H1 (cell line): ENCODE measurements at regions of chr7 and their contacts with region 1.

Region 1: DNA sequence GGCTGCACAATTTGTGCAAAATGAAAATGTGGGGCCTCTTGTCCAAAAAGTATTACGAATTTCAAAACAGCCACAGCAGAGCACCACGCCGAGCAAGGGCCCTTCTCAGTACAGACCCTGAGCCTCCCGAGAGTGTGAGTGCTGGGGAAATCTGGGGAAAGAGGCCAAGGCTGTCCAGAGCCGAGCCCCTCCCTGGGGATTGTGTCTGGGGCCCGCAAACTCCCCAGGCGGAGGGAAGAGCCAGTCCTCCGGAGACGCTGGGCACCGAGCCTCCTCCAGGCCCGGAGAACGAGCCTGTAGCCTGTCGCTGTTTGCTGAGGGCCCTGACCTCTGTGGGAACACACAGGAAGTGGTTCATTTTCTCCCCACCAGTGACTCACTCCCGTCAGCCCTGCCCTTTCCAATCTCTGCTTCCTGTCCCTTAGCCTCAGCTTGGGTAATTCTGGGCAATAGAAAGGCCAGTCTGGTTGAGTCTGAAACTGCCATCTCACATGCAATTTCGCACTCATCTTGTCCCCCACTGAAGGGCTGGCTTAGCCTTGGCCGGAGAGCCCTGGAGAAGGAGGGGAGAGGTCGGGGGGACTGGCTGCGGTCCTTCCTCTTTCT is 19.5 kb upstream of the GNA12 start:
- DNase-seq: no peak
- H3K4me3 ChIP-seq: no peak overlapping the region
- H3K27ac ChIP-seq: 0 out of 2 replicates have a peak overlapping the region, but pooled peaks have one; percentile 2
- H3K4me1 ChIP-seq: peaks cover 0 to 9% (median 3%) of the 10 kb centered on the region in 4 experiments; a peak in 5 of 7 replicates
- H3K27me3 ChIP-seq: no peaks in the 10 kb centered on the region; a peak in 1 of 7 replicates
- CTCF ChIP-seq: no peak
- EP300 ChIP-seq: no peak
- POLR2A ChIP-seq: no peak
- RAD21 ChIP-seq: no peak

Region 2: GRCh38 chr7:2471396-2471795 is 392.2 kb before region 1 on chr7:
- CTCF ChIA-PET with region 1: no interaction called
- POLR2A ChIA-PET with region 1: no interaction called
- DNase-seq: no peak
- H3K4me3 ChIP-seq: no peak overlapping the region
- H3K27ac ChIP-seq: no peak overlapping the region
- H3K4me1 ChIP-seq: peaks cover 0 to 21% (median 17%) of the 10 kb centered on the region in 4 experiments; a peak in 6 of 7 replicates
- H3K27me3 ChIP-seq: no peaks in the 10 kb centered on the region; a peak in 2 of 7 replicates
- CTCF ChIP-seq: no peak
- EP300 ChIP-seq: no peak
- POLR2A ChIP-seq: no peak
- RAD21 ChIP-seq: no peak

Region 3: GRCh38 chr7:2660585-2661408 is 202.8 kb before region 1 on chr7:
- CTCF ChIA-PET with region 1: no interaction called
- POLR2A ChIA-PET with region 1: no interaction called
- DNase-seq: peak in 1 of 2 experiments; percentile 71
- H3K4me3 ChIP-seq: no peak overlapping the region
- H3K27ac ChIP-seq: no peak overlapping the region
- H3K4me1 ChIP-seq: peaks cover 0 to 4% (median under 1%) of the 10 kb centered on the region in 4 experiments; a peak in 2 of 7 replicates
- H3K27me3 ChIP-seq: no peaks in the 10 kb centered on the region; a peak in 2 of 7 replicates
- CTCF ChIP-seq: peak in 2 of 3 experiments; percentile 50 to 60; a peak in 3 of 4 replicates
- EP300 ChIP-seq: no peak
- POLR2A ChIP-seq: no peak
- RAD21 ChIP-seq: peak; percentile 34 to 48; a peak in 3 of 4 replicates

Region 4: DNA sequence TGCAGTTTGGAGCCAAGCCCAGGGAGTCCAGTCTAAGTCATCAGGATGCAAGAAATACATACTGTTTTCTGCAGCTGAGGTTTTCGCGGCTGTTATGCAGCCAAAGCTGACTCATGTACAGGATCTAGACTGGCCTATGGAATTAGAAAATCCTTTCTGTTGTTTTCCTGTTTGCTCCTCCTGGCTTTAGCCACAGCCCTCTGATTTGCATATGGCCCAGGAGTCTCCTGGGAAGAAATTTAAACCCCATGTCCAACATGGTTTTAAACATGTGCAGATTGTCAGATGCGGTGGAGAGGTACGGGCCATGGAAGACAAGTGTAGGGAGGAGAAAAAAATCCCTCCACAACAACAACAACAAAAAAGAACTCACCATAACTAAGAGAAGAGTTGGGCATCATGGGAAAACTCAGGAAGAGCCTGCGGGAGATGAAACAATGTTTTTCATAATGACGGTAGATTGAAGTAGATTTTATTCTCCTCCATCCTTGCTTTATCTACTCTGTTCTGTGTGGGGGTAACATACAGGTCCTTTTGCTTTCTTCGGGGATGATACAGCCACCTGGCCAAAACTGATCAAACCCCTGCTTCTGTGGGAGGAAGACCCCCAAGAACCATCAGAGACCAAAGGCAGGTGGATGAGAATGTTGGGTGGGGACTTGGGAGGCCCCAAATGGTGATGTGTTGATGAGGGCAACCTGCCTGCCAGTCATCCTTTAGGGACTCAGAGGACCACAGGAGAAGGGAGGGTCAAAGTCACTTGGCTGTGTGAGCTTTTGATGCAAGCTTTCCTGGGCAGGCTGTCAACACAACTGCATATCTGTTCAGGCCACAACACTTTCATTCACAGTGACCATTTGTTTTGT is 10.4 kb after region 1 on chr7:
- CTCF ChIA-PET with region 1: interaction called, 10 read pairs
- POLR2A ChIA-PET with region 1: interaction called, 18 read pairs
- DNase-seq: peak in 1 of 2 experiments; percentile 74
- H3K4me3 ChIP-seq: no peak overlapping the region
- H3K27ac ChIP-seq: peak overlapping the region; percentile 94
- H3K4me1 ChIP-seq: peaks cover 0 to 19% (median 8%) of the 10 kb centered on the region in 4 experiments; a peak in 6 of 7 replicates
- H3K27me3 ChIP-seq: no peaks in the 10 kb centered on the region
- CTCF ChIP-seq: no peak
- EP300 ChIP-seq: no peak
- POLR2A ChIP-seq: peak; percentile 96 to 99
- RAD21 ChIP-seq: no peak

Region 5: GRCh38 chr7:2880874-2881533 is 17.4 kb after region 1 on chr7:
- CTCF ChIA-PET with region 1: interaction called, 34 read pairs
- POLR2A ChIA-PET with region 1: interaction called, 18 read pairs
- DNase-seq: peak in 1 of 2 experiments; percentile 80
- H3K4me3 ChIP-seq: no peak overlapping the region
- H3K27ac ChIP-seq: no peak overlapping the region
- H3K4me1 ChIP-seq: peaks cover 0 to 27% (median 14%) of the 10 kb centered on the region in 4 experiments; a peak in 6 of 7 replicates
- H3K27me3 ChIP-seq: no peaks in the 10 kb centered on the region
- CTCF ChIP-seq: no peak
- EP300 ChIP-seq: no peak
- POLR2A ChIP-seq: no peak
- RAD21 ChIP-seq: no peak

Region 6: DNA sequence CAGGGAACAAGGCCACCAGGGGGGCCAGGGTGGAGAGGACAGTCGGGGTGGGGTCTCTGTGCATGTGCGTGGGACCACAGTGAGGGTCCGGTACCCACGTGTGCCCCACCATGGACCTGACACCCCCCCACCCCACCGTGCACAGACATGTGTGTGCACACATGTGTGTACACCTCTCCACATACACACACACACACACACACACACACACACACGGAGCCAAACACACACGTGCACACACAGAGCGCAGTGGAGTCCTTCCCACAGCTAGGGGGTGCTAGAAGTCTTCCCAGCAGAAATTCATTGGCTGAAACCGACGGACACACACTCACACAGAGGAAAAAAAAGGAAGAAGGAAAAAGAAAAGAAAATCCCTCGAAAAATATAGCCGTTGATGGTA is 23.3 kb after region 1 on chr7:
- CTCF ChIA-PET with region 1: interaction called, 34 read pairs
- POLR2A ChIA-PET with region 1: no interaction called
- DNase-seq: no peak
- H3K4me3 ChIP-seq: no peak overlapping the region
- H3K27ac ChIP-seq: no peak overlapping the region
- H3K4me1 ChIP-seq: peaks cover 0 to 7% (median 4%) of the 10 kb centered on the region in 4 experiments; a peak in 3 of 7 replicates
- H3K27me3 ChIP-seq: no peaks in the 10 kb centered on the region
- CTCF ChIP-seq: peak; percentile 84 to 92 (median 89)
- EP300 ChIP-seq: no peak
- POLR2A ChIP-seq: no peak
- RAD21 ChIP-seq: peak; percentile 94 to 95

Region 7: GRCh38 chr7:3154912-3155494 is 291.4 kb after region 1 on chr7:
- CTCF ChIA-PET with region 1: interaction called, 17 read pairs
- POLR2A ChIA-PET with region 1: no interaction called
- DNase-seq: no peak
- H3K4me3 ChIP-seq: no peak overlapping the region
- H3K27ac ChIP-seq: no peak overlapping the region
- H3K4me1 ChIP-seq: peaks cover 0 to 6% (median 2%) of the 10 kb centered on the region in 4 experiments; a peak in 3 of 7 replicates
- H3K27me3 ChIP-seq: no peaks in the 10 kb centered on the region
- CTCF ChIP-seq: peak in 2 of 3 experiments; percentile 59 to 74; a peak in 3 of 4 replicates
- EP300 ChIP-seq: no peak
- POLR2A ChIP-seq: no peak
- RAD21 ChIP-seq: peak; percentile 81 to 84

Region 8: GRCh38 chr7:3399858-3400257 is 536.3 kb after region 1 on chr7:
- CTCF ChIA-PET with region 1: interaction called, 14 read pairs
- POLR2A ChIA-PET with region 1: no interaction called
- DNase-seq: peak; percentile 69 to 85
- H3K4me3 ChIP-seq: no peak overlapping the region
- H3K27ac ChIP-seq: no peak overlapping the region
- H3K4me1 ChIP-seq: peaks cover 0 to 3% (median 1%) of the 10 kb centered on the region in 4 experiments; a peak in 4 of 7 replicates
- H3K27me3 ChIP-seq: no peaks in the 10 kb centered on the region
- CTCF ChIP-seq: peak; percentile 58 to 98 (median 95)
- EP300 ChIP-seq: peak in 1 of 2 experiments; percentile 64; a peak in 1 of 3 replicates
- POLR2A ChIP-seq: no peak
- RAD21 ChIP-seq: peak; percentile 71 to 83

Region 9: DNA sequence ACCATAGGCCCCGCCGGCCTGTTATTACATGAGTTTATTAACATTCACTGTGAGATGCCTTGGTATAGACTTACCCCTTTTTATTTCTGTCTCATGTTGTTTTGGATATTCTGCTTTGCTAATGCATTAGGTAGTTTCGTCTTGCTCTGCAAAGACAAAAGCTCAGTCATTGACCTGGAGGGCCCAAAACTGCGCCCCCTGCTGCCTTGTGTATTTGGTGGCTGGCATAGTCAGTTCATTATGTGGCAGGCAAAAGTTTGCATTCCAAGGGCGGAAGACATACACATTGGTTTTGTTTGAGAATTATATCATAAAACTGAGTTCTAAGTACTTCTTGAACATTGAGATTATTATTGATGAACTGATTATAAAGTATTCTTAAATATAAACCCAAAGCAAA is 810.0 kb after region 1 on chr7:
- CTCF ChIA-PET with region 1: interaction called, 10 read pairs
- POLR2A ChIA-PET with region 1: no interaction called
- DNase-seq: peak; percentile 25 to 84
- H3K4me3 ChIP-seq: no peak overlapping the region
- H3K27ac ChIP-seq: no peak overlapping the region
- H3K4me1 ChIP-seq: no peaks in the 10 kb centered on the region
- H3K27me3 ChIP-seq: no peaks in the 10 kb centered on the region
- CTCF ChIP-seq: peak; percentile 75 to 81 (median 80)
- EP300 ChIP-seq: no peak
- POLR2A ChIP-seq: no peak
- RAD21 ChIP-seq: peak; percentile 69 to 79